ENCODE measurements at regions of chr16 and their contacts with region 1.

Region 1: GRCh38 chr16:29815793-29816693 is at the start of gene PAGR1:
- DNase-seq: peak; percentile 95 to 100
- ATAC-seq: peak; percentile 49 to 72
- H3K4me3 ChIP-seq: peak within 1 kb of the TSS; percentile 92
- H3K27ac ChIP-seq: peak within 1 kb of the TSS; percentile 98 to 99
- H3K4me1 ChIP-seq: peaks cover 39% of the 10 kb centered on the region
- CTCF ChIP-seq: peak; percentile 92
- EP300 ChIP-seq: no peak
- POLR2A ChIP-seq: peak; percentile 88
- RAD21 ChIP-seq: peak; percentile 51 to 68
- polyA plus RNA-seq, gene PAGR1: 18.9 and 26.7 TPM in 2 replicates

Region 2: GRCh38 chr16:29770250-29770929 is 45.7 kb before region 1 on chr16:
- CTCF ChIA-PET with region 1: no interaction called
- POLR2A ChIA-PET with region 1: no interaction called
- DNase-seq: no peak
- ATAC-seq: no peak
- H3K4me3 ChIP-seq: no peak overlapping the region
- H3K27ac ChIP-seq: no peak overlapping the region
- H3K4me1 ChIP-seq: no peaks in the 10 kb centered on the region
- CTCF ChIP-seq: no peak
- EP300 ChIP-seq: no peak
- POLR2A ChIP-seq: no peak
- RAD21 ChIP-seq: no peak

Region 3: DNA sequence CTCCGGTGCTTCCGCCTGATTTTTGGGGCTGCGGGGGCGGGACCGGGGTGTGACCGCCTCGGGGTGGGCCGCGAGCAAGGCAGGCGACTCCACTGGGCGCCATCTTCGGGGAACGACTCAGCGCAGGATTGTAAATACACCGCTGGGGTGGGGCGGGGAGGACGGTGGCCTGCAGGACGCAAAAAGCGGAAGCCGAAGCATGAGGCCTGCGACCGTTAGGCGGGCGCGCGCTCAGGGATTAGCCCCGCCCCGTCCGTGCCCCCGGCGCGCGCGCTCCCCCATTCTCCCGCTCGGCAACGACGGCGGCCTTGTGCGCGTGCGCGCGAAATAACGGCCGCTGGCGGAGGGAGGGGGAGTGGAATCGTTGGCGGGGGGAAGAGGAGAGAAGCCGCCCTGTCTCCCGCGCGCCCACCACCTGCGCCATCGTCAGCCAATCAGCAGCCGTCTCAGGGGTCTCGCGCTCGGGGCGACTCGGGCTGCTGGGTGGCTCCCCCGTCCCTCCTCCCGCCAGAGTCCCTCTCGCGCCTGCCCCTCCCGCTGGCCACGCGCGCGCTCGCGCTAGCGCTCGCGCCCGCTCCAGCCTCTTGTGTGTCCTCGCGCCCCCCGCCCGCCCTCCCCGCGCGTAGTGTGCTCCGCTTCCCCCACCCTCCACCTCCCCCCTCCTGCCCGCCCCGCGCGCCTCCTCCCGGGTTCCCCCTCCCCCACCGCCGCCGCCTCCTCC is 10.5 kb before region 1 on chr16:
- CTCF ChIA-PET with region 1: interaction called, 74 read pairs
- POLR2A ChIA-PET with region 1: interaction called, 14 read pairs
- DNase-seq: peak; percentile 84 to 98
- ATAC-seq: peak; percentile 44 to 80
- H3K4me3 ChIP-seq: peak overlapping the region; percentile 55
- H3K27ac ChIP-seq: peak overlapping the region; percentile 98 to 99
- H3K4me1 ChIP-seq: peaks cover 38% of the 10 kb centered on the region
- CTCF ChIP-seq: no peak
- EP300 ChIP-seq: peak in 1 of 2 experiments; percentile 49; a peak in 1 of 5 replicates
- POLR2A ChIP-seq: peak; percentile 57
- RAD21 ChIP-seq: peak in 1 of 2 experiments; percentile 3; a peak in 1 of 5 replicates

Region 4: DNA sequence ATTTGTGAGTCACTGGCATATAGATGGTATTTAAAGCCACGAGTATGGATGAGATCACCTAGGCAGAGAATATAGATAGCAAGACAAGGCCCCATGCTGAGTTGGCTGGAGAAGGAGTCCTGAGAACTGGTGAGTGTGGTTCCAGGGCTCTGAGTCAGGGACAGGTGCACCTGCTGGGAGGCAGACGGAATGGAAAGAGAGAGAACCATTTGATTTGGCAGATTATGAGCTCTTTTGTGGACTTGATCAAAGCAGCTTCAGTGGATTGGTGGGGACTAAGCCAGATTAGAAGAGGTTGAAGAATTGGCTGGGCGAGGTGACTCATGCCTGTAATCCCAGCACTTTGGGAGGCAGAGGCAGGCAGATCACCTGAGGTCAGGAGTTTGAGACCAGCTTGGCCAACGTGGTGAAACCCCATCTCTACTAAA is 202.7 kb after region 1 on chr16:
- CTCF ChIA-PET with region 1: interaction called, 12 read pairs
- POLR2A ChIA-PET with region 1: no interaction called
- DNase-seq: no peak
- ATAC-seq: no peak
- H3K4me3 ChIP-seq: no peak overlapping the region
- H3K27ac ChIP-seq: no peak overlapping the region
- H3K4me1 ChIP-seq: no peaks in the 10 kb centered on the region
- CTCF ChIP-seq: no peak
- EP300 ChIP-seq: no peak
- POLR2A ChIP-seq: no peak
- RAD21 ChIP-seq: no peak